Activated T-helper 1 cell treated with anti-CD3 and anti-CD28 coated beads, Interleukin-12 subunit alpha, Interleukin-12 subunit beta, Interleukin-2, Interleukin-4 antibody, amounts not matched to agents 30 ng/mL and 10 ng/mL and 1 ng/mL, durations not matched to agents 14 hours and 24 hours and 36 hours (primary cell): ENCODE measurements at regions of chr7 and their contacts with region 1.

Region 1: GRCh38 chr7:100088621-100089457 is at the start of gene COPS6:
- DNase-seq: peak; percentile 82
- H3K4me3 Mint-ChIP-seq: peak within 1 kb of the TSS; percentile 90
- H3K27ac Mint-ChIP-seq: peak within 1 kb of the TSS; percentile 93
- H3K4me1 Mint-ChIP-seq: peaks cover 29% of the 10 kb centered on the region
- H3K27me3 Mint-ChIP-seq: peaks cover 6% of the 10 kb centered on the region
- total RNA-seq, gene COPS6: 101 and 115 TPM in 2 replicates

Region 2: DNA sequence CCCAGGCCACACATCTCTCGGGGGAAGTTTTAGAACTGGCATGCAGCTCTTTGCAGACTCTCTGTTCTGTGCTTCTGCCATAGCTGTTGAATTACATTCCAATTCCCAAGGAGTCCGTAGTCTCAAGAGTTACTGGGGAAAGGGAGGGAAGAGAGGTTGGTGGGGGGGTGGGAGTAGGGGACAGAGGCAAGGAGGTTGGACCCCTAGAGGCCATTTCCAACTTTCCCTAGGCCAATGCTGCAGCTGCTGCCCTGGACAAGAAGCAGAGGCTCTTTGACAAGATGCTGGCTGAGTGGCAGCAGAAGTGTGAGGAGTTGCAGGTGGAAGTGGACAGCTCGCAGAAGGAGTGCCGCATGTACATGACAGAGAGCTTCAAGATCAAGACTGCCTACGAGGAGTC is 792.4 kb before region 1 on chr7:
- intact Hi-C with region 1: no loop called
- DNase-seq: no peak
- H3K4me3 Mint-ChIP-seq: no peak overlapping the region
- H3K27ac Mint-ChIP-seq: no peak overlapping the region
- H3K4me1 Mint-ChIP-seq: no peaks in the 10 kb centered on the region
- H3K27me3 Mint-ChIP-seq: no peaks in the 10 kb centered on the region

Region 3: DNA sequence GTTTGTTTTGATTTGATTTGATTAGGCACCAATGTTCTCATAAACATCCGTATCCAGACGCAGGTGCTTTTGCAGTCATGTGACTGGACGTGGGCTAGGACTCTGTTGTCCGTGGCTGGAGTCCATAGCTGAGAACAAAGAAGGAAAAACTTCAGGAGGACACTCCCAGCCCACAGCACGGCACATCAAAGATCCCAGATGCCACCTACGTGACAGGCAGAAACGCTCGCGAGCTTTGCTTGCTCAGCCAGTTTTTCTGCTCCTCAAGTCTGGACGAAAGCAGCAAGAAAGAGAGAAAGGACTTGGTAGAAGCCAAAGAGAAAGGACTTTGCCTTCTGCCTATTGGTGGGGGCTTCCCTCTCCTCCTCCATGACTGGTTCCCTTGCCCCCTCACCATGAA is 80.3 kb before region 1 on chr7:
- intact Hi-C with region 1: no loop called
- DNase-seq: no peak
- H3K4me3 Mint-ChIP-seq: no peak overlapping the region
- H3K27ac Mint-ChIP-seq: peak overlapping the region; percentile 23
- H3K4me1 Mint-ChIP-seq: peaks cover 9% of the 10 kb centered on the region
- H3K27me3 Mint-ChIP-seq: no peaks in the 10 kb centered on the region

Region 4: DNA sequence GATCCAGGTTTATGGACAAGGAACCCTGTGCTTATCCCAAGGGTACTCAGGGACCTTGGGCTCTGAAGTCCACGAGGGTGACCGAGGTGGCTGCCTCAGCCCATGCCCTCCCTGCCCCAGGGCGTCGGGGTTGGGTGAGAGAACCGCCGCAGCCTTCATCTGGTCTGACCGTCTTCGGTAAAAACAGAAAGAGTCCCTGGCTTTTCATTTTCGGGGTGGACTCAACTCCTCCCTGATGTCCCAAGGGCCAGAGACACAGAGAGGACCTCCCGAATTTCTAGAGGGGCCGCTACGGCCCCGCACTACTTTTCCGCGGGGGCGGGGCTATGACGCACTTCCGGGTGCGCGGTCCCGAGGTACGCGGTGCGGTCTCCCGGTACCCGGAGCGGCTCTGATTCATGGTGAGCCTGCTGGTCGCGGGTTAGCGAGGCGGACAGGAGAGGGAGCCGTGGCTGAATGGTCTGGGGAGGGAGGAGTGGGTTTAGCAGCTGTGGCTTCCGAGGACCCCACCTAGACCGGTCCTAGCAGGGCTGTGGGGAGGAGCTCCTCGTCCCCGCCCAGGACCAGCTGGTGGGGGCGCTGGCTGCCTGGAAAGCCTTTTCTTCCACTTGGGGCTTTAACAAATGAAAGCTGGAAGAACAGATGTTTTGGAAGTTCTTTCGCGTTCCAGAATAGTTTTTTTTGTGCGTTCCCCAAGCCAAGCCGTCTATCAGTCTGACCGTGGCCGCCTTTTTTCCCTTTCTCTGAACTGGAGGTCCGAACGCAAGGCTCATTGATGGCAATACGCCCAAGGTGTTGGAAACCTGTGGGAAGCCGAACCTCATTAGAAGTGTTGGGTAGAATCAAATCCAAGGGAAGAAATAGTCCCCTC is 39.2 kb before region 1 on chr7 and contains the start of gene ZSCAN21:
- intact Hi-C with region 1: loop called (anchors 2 kb)
- DNase-seq: peak; percentile 79
- H3K4me3 Mint-ChIP-seq: peak within 1 kb of the TSS; percentile 88
- H3K27ac Mint-ChIP-seq: peak within 1 kb of the TSS; percentile 92
- H3K4me1 Mint-ChIP-seq: peaks cover 13% of the 10 kb centered on the region
- H3K27me3 Mint-ChIP-seq: peaks cover 2% of the 10 kb centered on the region
- total RNA-seq, gene ZSCAN21: 6.8 and 9.8 TPM in 2 replicates

Region 5: GRCh38 chr7:100126931-100127865 is 38.4 kb after region 1 on chr7 and contains the start of gene MBLAC1:
- intact Hi-C with region 1: loop called (anchors 2 kb)
- DNase-seq: peak; percentile 85
- H3K4me3 Mint-ChIP-seq: peak within 1 kb of the TSS; percentile 94
- H3K27ac Mint-ChIP-seq: peak within 1 kb of the TSS; percentile 95
- H3K4me1 Mint-ChIP-seq: peaks cover 20% of the 10 kb centered on the region
- H3K27me3 Mint-ChIP-seq: no peaks in the 10 kb centered on the region
- total RNA-seq, gene MBLAC1: 4.1 and 5.5 TPM in 2 replicates